ENCODE measurements at regions of chr11 and their contacts with region 1.

Region 1: GRCh38 chr11:108733479-108734116 is 68.7 kb downstream of the DDX10 start:
- DNase-seq: peak; percentile 93
- ATAC-seq: peak; percentile 96
- H3K4me3 ChIP-seq: no peak overlapping the region
- H3K27ac ChIP-seq: peak overlapping the region; percentile 79
- H3K4me1 ChIP-seq: peaks cover 22% of the 10 kb centered on the region
- H3K27me3 ChIP-seq: no peaks in the 10 kb centered on the region
- CTCF ChIP-seq: no peak
- EP300 ChIP-seq: peak; percentile 56 to 94; a peak in 3 of 4 replicates
- POLR2A ChIP-seq: peak; percentile 57
- RAD21 ChIP-seq: no peak

Region 2: DNA sequence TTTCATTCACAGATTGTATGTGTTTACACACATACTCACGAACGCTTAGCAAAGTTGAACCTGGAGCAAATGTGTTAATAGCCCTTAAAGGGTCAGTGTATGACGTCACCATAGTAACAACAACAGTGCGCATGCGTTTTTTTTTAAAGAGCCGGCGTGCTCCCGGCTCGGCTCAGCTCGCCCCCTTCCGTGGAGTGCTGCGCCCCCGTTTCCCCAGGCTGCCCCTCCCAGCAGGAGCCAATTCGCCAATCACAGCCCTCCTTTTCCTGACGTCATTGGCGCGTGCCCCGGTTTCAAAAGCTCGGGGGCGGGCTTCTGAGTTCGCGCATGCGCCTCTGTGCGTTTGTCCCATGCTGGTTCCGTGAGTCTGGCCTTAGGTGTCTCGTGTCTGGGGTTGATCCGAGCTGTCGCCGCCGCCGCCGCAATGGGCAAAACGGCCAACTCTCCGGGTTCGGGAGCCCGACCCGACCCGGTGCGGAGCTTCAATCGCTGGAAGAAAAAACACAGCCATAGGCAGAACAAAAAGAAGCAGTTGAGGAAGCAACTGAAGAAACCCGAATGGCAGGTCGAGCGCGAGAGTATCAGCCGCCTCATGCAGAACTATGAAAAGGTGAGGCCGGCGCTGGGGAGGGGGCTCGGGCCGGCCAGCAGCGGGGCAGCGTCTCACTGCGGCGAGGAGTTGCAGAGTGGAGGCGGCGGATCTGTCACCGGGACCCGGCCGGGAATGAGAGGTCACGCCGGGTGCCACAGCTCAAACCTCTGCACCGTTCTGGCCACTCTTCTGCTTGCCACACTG is 68.7 kb before region 1 on chr11 and contains the start of gene DDX10:
- CTCF ChIA-PET with region 1: interaction called, 30 read pairs
- POLR2A ChIA-PET with region 1: interaction called, 6 read pairs
- RAD21 ChIA-PET with region 1: interaction called, 13 read pairs
- SMC1A ChIA-PET with region 1: interaction called, 53 read pairs
- in situ Hi-C with region 1: no loop called
- intact Hi-C with region 1: loop called (anchors 5 kb)
- DNase-seq: peak; percentile 92
- ATAC-seq: peak; percentile 84
- H3K4me3 ChIP-seq: peak within 1 kb of the TSS; percentile 94
- H3K27ac ChIP-seq: peak within 1 kb of the TSS; percentile 79
- H3K4me1 ChIP-seq: peaks cover 30% of the 10 kb centered on the region
- H3K27me3 ChIP-seq: no peaks in the 10 kb centered on the region
- CTCF ChIP-seq: no peak; a peak in 1 of 6 replicates
- EP300 ChIP-seq: no peak; a peak in 1 of 4 replicates
- POLR2A ChIP-seq: peak; percentile 75
- RAD21 ChIP-seq: no peak
- polyA plus RNA-seq, gene DDX10: 20.9 to 31.5 TPM

Region 3: GRCh38 chr11:108703916-108704315 is 29.7 kb before region 1 on chr11:
- CTCF ChIA-PET with region 1: interaction called, 173 read pairs
- POLR2A ChIA-PET with region 1: interaction called, 13 read pairs
- RAD21 ChIA-PET with region 1: interaction called, 161 read pairs
- SMC1A ChIA-PET with region 1: interaction called, 136 read pairs
- in situ Hi-C with region 1: no loop called
- intact Hi-C with region 1: loop called (anchors 1 kb)
- DNase-seq: no peak
- ATAC-seq: no peak
- H3K4me3 ChIP-seq: no peak overlapping the region
- H3K27ac ChIP-seq: no peak overlapping the region
- H3K4me1 ChIP-seq: 0 out of 2 replicates have a peak, but pooled peaks cover 3% of the 10 kb centered on the region
- H3K27me3 ChIP-seq: no peaks in the 10 kb centered on the region
- CTCF ChIP-seq: no peak
- EP300 ChIP-seq: no peak
- POLR2A ChIP-seq: no peak
- RAD21 ChIP-seq: no peak

Region 4: DNA sequence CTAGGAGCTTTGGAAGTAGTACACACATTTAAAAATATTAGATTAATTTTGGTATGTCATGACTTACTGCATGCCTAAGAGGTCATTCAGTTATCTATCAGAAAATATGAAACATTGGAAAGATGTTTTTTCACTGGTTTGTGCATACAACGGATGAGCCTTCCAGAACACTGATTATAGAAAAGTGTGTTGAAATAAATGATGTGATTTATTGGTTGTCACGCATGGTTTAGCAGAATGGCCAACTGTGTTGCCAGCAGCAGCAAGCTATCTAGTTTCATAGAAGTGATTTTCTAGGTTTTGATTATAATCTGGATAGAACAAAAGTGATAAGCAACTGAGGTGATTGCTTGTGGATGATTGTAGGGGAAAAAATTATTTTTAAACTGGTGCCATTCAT is 15.1 kb before region 1 on chr11:
- CTCF ChIA-PET with region 1: interaction called, 40 read pairs
- POLR2A ChIA-PET with region 1: interaction called, 5 read pairs
- RAD21 ChIA-PET with region 1: interaction called, 32 read pairs
- SMC1A ChIA-PET with region 1: interaction called, 45 read pairs
- in situ Hi-C with region 1: no loop called
- intact Hi-C with region 1: loop called (anchors 2 kb)
- DNase-seq: no peak
- ATAC-seq: no peak
- H3K4me3 ChIP-seq: no peak overlapping the region
- H3K27ac ChIP-seq: no peak overlapping the region
- H3K4me1 ChIP-seq: peaks cover 4% of the 10 kb centered on the region; the same call in 1 of the 2 replicates
- H3K27me3 ChIP-seq: no peaks in the 10 kb centered on the region
- CTCF ChIP-seq: no peak
- EP300 ChIP-seq: no peak
- POLR2A ChIP-seq: no peak
- RAD21 ChIP-seq: no peak

Region 5: GRCh38 chr11:108748968-108749367 is 15.4 kb after region 1 on chr11:
- CTCF ChIA-PET with region 1: interaction called, 23 read pairs
- POLR2A ChIA-PET with region 1: interaction called, 3 read pairs
- RAD21 ChIA-PET with region 1: interaction called, 6 read pairs
- SMC1A ChIA-PET with region 1: interaction called, 16 read pairs
- in situ Hi-C with region 1: no loop called
- intact Hi-C with region 1: no loop called
- DNase-seq: no peak
- ATAC-seq: no peak
- H3K4me3 ChIP-seq: no peak overlapping the region
- H3K27ac ChIP-seq: no peak overlapping the region
- H3K4me1 ChIP-seq: no peaks in the 10 kb centered on the region
- H3K27me3 ChIP-seq: no peaks in the 10 kb centered on the region
- CTCF ChIP-seq: no peak
- EP300 ChIP-seq: no peak
- POLR2A ChIP-seq: no peak
- RAD21 ChIP-seq: no peak

Region 6: DNA sequence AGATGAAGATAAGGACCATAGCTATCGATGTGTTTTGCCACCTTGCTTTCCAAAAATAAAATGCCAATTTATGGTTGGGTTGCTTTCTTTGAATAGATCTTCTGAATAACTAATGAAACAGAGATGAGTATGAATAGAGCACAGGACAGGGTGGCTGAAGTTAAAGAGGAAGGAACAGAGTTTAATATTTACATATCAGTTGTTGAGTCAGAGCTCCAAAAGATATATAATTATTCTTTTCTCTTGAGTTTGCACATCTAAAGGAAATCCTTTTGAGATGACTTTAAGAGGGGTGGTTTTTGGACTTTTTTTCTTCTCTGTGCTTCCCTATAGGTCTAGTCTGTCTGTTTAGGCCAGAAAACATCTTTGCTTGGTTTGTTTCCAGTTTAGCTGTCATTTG is 46.5 kb after region 1 on chr11:
- CTCF ChIA-PET with region 1: interaction called, 18 read pairs
- POLR2A ChIA-PET with region 1: no interaction called
- RAD21 ChIA-PET with region 1: no interaction called
- SMC1A ChIA-PET with region 1: interaction called, 4 read pairs
- in situ Hi-C with region 1: no loop called
- intact Hi-C with region 1: no loop called
- DNase-seq: no peak
- ATAC-seq: peak; percentile 71
- H3K4me3 ChIP-seq: no peak overlapping the region
- H3K27ac ChIP-seq: no peak overlapping the region
- H3K4me1 ChIP-seq: no peaks in the 10 kb centered on the region
- H3K27me3 ChIP-seq: no peaks in the 10 kb centered on the region
- CTCF ChIP-seq: no peak
- EP300 ChIP-seq: no peak
- POLR2A ChIP-seq: no peak
- RAD21 ChIP-seq: no peak

Region 7: DNA sequence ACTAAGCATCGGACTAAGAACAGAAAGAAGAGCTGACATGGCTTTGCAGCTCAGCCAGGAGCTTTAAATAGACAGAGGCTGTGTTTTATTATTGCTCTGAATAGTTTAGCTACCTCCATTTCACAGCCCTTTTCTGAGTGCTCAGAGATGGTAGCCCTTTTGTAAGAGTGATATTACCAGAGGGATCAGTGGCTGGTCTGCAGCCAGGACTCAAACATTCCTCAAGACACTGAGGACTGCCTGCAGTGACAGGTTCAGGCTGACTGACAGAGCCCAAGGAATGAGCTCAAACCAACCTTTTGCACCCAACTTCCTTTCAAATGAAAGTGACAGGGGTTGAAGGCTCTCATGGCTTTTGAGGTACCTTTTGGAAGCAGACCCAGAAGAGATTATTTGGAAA is 120.3 kb after region 1 on chr11:
- CTCF ChIA-PET with region 1: interaction called, 24 read pairs
- POLR2A ChIA-PET with region 1: interaction called, 3 read pairs
- RAD21 ChIA-PET with region 1: interaction called, 21 read pairs
- SMC1A ChIA-PET with region 1: interaction called, 22 read pairs
- in situ Hi-C with region 1: no loop called
- intact Hi-C with region 1: no loop called
- DNase-seq: no peak
- ATAC-seq: peak; percentile 72
- H3K4me3 ChIP-seq: peak overlapping the region; percentile 61
- H3K27ac ChIP-seq: peak overlapping the region; percentile 80
- H3K4me1 ChIP-seq: peaks cover 13% of the 10 kb centered on the region
- H3K27me3 ChIP-seq: no peaks in the 10 kb centered on the region
- CTCF ChIP-seq: no peak
- EP300 ChIP-seq: no peak
- POLR2A ChIP-seq: peak; percentile 43; the same call in 1 of the 2 replicates
- RAD21 ChIP-seq: no peak